ENCODE measurements at regions of chr9 and their contacts with region 1.

Region 1: GRCh38 chr9:116149844-116150243 is 3.7 kb upstream of the PAPPA start:
- DNase-seq: peak; percentile 17
- H3K4me3 ChIP-seq: no peak overlapping the region
- H3K27ac ChIP-seq: no peak overlapping the region
- H3K4me1 ChIP-seq: peaks cover 0 to 15% (median 6%) of the 10 kb centered on the region in 4 donors
- H3K27me3 ChIP-seq: peaks cover 61% of the 10 kb centered on the region
- CTCF ChIP-seq: peak; percentile 45 to 62 (median 51)
- EP300 ChIP-seq: no peak
- POLR2A ChIP-seq: no peak

Region 2: GRCh38 chr9:114504341-114505186 is 1645.3 kb before region 1 on chr9:
- in situ Hi-C with region 1: no loop called
- intact Hi-C with region 1: no loop called
- DNase-seq: peak; percentile 44
- H3K4me3 ChIP-seq: peak overlapping the region; percentile 59 to 73 (median 72)
- H3K27ac ChIP-seq: peak overlapping the region; percentile 74 to 89 (median 82)
- H3K4me1 ChIP-seq: peaks cover 5 to 27% (median 19%) of the 10 kb centered on the region in 4 donors
- H3K27me3 ChIP-seq: peaks cover 4% of the 10 kb centered on the region
- CTCF ChIP-seq: peak; percentile 14 to 42 (median 36)
- EP300 ChIP-seq: no peak
- POLR2A ChIP-seq: no peak

Region 3: GRCh38 chr9:116572095-116572748 is 422.4 kb after region 1 on chr9:
- in situ Hi-C with region 1: loop called in 2 of 4 experiments (anchors 10 to 25 kb)
- intact Hi-C with region 1: no loop called
- DNase-seq: peak; percentile 86
- H3K4me3 ChIP-seq: no peak overlapping the region
- H3K27ac ChIP-seq: no peak overlapping the region
- H3K4me1 ChIP-seq: peaks cover 3 to 32% (median 17%) of the 10 kb centered on the region in 4 donors
- H3K27me3 ChIP-seq: no peaks in the 10 kb centered on the region
- CTCF ChIP-seq: peak; percentile 81 to 91 (median 86)
- EP300 ChIP-seq: no peak
- POLR2A ChIP-seq: no peak

Region 4: DNA sequence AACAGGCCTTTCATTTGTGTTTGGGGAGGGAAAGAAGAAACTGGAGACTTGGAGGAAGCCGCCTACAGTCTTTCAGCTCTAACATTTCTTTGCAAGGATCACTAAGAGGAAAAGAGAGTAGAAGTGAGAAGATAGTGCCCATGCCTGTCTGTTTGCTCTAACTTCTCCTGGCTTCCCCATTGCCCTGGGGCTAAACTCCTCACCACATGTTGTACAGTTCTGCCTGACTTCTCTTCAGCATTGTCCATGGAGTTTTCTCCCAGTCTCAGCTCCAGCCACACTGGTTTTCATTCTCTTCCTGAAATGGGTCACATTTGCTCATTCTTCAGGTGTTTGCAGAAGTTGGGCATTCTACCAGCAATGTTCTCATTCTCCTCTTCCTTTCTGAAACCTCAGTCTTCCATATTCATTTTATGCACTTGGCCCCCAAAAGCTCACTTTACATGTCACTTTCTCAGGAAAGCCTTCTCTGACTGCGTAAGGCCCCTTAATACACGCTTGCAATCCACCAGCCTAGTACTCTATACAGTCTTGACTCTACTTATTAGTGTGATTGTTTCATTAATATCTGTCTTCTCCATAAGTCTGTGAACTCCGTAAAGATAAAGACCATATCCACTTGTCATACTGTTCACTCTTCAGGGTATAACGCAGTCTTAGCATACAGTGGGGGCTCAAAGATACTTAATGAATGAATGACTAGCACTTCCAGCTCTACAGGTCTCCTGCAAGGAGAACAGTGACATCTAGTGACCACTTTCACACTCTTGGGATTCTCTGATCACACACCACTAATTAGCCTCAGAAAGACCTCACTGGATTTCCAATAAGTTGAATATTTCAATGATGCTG is 497.0 kb after region 1 on chr9:
- in situ Hi-C with region 1: loop called (anchors 25 kb)
- intact Hi-C with region 1: no loop called
- DNase-seq: no peak
- H3K4me3 ChIP-seq: no peak overlapping the region
- H3K27ac ChIP-seq: no peak overlapping the region
- H3K4me1 ChIP-seq: no peaks in the 10 kb centered on the region
- H3K27me3 ChIP-seq: no peaks in the 10 kb centered on the region
- CTCF ChIP-seq: peak; percentile 32 to 50 (median 43)
- EP300 ChIP-seq: no peak
- POLR2A ChIP-seq: no peak

Region 5: DNA sequence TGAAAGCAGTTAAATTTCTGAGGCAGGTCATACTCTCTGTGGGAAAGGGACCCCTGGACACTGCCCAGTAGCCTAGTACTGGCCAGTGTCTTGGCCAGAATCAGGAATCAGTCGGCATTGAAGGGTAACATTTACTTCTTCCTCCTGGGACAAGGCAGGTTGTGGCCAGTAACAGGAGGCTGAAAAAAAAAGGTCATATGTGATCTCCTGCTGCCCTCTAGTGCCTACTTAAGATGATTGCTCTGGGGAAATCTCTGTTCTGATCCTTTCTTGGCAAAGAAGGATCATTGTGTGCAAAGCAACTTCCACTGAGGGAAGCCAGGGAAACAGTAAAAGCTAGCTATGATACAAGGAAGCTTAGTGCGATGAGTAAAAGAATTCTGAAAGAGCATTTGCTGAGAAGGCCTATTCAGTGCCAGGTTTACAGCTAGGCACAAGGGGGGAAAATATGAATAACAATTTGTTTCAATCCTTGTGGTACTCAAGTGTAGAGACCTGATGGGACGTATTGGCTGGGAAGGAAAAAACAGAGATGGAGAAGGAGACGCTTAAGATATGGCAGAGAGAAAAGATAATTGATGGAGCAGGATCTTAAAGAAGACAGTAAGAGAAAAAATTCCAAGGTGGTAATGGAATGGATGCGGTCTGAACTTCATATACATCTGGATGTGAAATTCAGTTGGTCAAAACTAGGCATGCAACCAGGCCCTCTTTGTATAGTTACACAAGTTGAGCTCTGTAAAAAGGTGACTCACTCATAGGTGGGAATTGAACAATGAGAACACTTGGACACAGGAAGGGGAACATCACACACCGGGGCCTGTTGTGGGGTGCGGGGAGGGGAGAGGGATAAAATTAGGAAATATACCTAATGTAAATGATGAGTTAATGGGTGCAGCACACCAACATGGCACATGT is 511.5 kb after region 1 on chr9:
- in situ Hi-C with region 1: loop called in 3 of 4 experiments (anchors 25 kb)
- intact Hi-C with region 1: no loop called
- DNase-seq: no peak
- H3K4me3 ChIP-seq: no peak overlapping the region
- H3K27ac ChIP-seq: no peak overlapping the region
- H3K4me1 ChIP-seq: peaks cover 0 to 22% (median 1%) of the 10 kb centered on the region in 4 donors
- H3K27me3 ChIP-seq: no peaks in the 10 kb centered on the region
- CTCF ChIP-seq: peak; percentile 67 to 73 (median 69)
- EP300 ChIP-seq: no peak
- POLR2A ChIP-seq: no peak

Measured in transverse colon (tissue), 4 donors.